Activated CD4-positive, alpha-beta T cell treated with anti-CD3 and anti-CD28 coated beads, Interleukin-2, amount 10 ng/mL, durations not matched to agents 7 days and 5 days (primary cell): ENCODE measurements at regions of chr9 and their contacts with region 1.

Region 1: DNA sequence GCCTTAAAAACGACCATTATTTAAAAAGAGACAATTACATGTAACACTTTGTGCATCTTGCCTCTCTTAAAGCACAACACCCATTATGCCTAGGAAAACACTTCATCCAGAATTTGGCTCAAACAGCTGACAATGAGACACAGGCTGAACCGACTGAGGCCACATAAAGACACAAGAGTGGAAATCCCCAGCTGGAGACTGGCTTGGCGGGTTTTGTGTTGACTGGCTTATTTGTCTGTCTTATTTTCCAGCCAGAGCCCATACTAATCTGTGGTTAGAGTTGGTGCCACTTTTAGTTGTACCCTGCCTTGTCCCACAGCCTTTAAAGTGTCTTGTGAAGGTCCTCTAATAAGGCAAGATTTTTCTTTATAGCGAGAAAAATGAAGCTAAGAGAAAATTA is 21.2 kb downstream of the TRIM14 start:
- DNase-seq: peak; percentile 34
- H3K4me3 Mint-ChIP-seq: no peak overlapping the region
- H3K27ac Mint-ChIP-seq: peak overlapping the region; percentile 19
- H3K4me1 Mint-ChIP-seq: peaks cover 72% of the 10 kb centered on the region
- H3K27me3 Mint-ChIP-seq: no peaks in the 10 kb centered on the region

Region 2: GRCh38 chr9:98087420-98088354 is 10.1 kb before region 1 on chr9:
- CTCF ChIA-PET with region 1: interaction called, 39 read pairs
- POLR2A ChIA-PET with region 1: no interaction called
- DNase-seq: no peak
- H3K4me3 Mint-ChIP-seq: no peak overlapping the region
- H3K27ac Mint-ChIP-seq: no peak overlapping the region
- H3K4me1 Mint-ChIP-seq: peaks cover 36% of the 10 kb centered on the region
- H3K27me3 Mint-ChIP-seq: no peaks in the 10 kb centered on the region